ENCODE measurements at regions of chr6 and their contacts with region 1.

Region 1: DNA sequence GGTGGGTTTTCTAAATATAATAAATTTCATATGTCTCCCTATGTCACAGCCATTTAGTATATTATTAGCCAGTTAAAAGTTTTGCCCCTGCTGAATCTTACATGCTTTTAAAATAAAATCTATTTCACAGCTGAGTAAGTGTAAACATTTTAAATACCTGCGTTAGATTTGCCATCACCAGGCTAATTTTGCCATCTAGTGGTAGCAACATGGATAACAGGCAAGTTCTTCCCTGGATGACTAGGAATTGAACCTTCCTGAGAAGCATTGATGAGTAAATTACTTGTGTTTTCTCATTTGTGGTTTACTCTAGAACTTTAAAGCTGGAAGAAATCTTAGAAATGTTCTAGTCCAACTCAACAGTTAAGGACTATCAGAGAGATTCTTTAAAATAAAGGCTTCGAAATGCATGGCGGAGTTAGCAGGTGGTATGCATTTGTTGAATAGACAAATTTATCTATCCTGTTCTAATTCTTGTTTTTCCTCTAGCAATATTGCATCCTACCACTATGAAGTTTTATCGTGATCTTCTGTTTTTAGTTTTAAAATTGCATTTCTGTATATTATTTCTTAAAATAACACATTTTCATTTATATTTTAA is 2.6 kb downstream of the PRSS35 start:
- DNase-seq: peak; percentile 56
- H3K4me3 Mint-ChIP-seq: no peak overlapping the region
- H3K27ac Mint-ChIP-seq: no peak overlapping the region
- H3K4me1 Mint-ChIP-seq: no peaks in the 10 kb centered on the region
- H3K27me3 Mint-ChIP-seq: no peaks in the 10 kb centered on the region
- CTCF ChIP-seq: peak; percentile 83

Region 2: GRCh38 chr6:83221889-83222479 is 293.0 kb before region 1 on chr6:
- CTCF ChIA-PET with region 1: interaction called, 4 read pairs
- intact Hi-C with region 1: loop called (anchors 1 kb)
- DNase-seq: no peak
- H3K4me3 Mint-ChIP-seq: no peak overlapping the region
- H3K27ac Mint-ChIP-seq: no peak overlapping the region
- H3K4me1 Mint-ChIP-seq: no peaks in the 10 kb centered on the region
- H3K27me3 Mint-ChIP-seq: no peaks in the 10 kb centered on the region
- CTCF ChIP-seq: peak; percentile 19

Region 3: DNA sequence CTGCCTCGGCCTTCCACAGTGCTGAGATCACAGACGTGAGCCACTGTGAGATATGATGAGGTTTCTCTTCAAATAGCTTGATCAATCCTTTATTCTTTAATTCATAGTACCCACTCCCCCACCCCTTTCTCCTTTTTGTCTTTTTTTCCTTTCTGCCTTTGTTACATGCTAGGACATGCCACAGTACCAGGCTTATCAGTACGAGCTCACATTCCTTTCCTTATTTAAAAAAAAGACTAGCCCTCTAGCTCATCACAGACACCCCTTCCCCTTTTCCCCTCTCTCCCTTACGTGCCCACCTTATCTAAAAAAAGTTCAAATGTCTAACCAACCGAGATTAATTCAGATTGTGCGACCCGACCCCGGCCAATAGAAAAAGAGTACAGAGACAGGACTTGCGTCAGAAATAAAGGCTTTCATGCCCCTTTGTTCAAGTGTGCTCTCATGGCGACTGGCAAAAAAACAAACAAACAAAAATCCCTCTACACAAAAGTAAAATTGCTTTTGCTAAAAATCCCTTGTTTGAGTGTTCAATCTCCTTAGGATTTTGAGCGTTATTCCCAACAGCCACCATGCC is 567.8 kb after region 1 on chr6:
- CTCF ChIA-PET with region 1: no interaction called
- intact Hi-C with region 1: no loop called
- DNase-seq: no peak
- H3K4me3 Mint-ChIP-seq: no peak overlapping the region
- H3K27ac Mint-ChIP-seq: no peak overlapping the region
- H3K4me1 Mint-ChIP-seq: peaks cover 12% of the 10 kb centered on the region
- H3K27me3 Mint-ChIP-seq: no peaks in the 10 kb centered on the region
- CTCF ChIP-seq: no peak

Measured in Calu3 (cell line).